CD4-positive, alpha-beta memory T cell (primary cell): ENCODE measurements at regions of chr15 and their contacts with region 1.

Region 1: GRCh38 chr15:80970018-80970658 is 19.5 kb downstream of the MESD start:
- DNase-seq: peak; percentile 52 to 65 (median 64)
- H3K4me3 ChIP-seq: no peak overlapping the region
- H3K4me3 Mint-ChIP-seq: no peak overlapping the region
- H3K27ac ChIP-seq: no peak overlapping the region
- H3K27ac Mint-ChIP-seq: peak overlapping the region in 4 of 7 donors; percentile 3 to 68 (median 44)
- H3K4me1 ChIP-seq: peaks cover 3% of the 10 kb centered on the region
- H3K4me1 Mint-ChIP-seq: peaks cover 3 to 21% (median 17%) of the 10 kb centered on the region in 4 donors
- H3K27me3 ChIP-seq: no peaks in the 10 kb centered on the region
- H3K27me3 Mint-ChIP-seq: no peaks in the 10 kb centered on the region

Region 2: GRCh38 chr15:80455668-80456442 is 514.3 kb before region 1 on chr15:
- CTCF ChIA-PET with region 1: interaction called, 47 read pairs
- POLR2A ChIA-PET with region 1: no interaction called
- intact Hi-C with region 1: no loop called
- DNase-seq: peak in 4 of 5 donors; percentile 52 to 55 (median 54)
- H3K4me3 ChIP-seq: no peak overlapping the region
- H3K4me3 Mint-ChIP-seq: peak overlapping the region in 1 of 8 donors; percentile 25
- H3K27ac ChIP-seq: no peak overlapping the region
- H3K27ac Mint-ChIP-seq: no peak overlapping the region
- H3K4me1 ChIP-seq: no peaks in the 10 kb centered on the region
- H3K4me1 Mint-ChIP-seq: peaks cover 0 to 6% (median 1%) of the 10 kb centered on the region in 4 donors
- H3K27me3 ChIP-seq: peaks cover 3% of the 10 kb centered on the region
- H3K27me3 Mint-ChIP-seq: peaks cover 8 to 17% of the 10 kb centered on the region in 2 donors

Region 3: GRCh38 chr15:80776420-80777045 is 193.6 kb before region 1 on chr15:
- CTCF ChIA-PET with region 1: interaction called, 20 read pairs
- POLR2A ChIA-PET with region 1: no interaction called
- intact Hi-C with region 1: no loop called
- DNase-seq: peak; percentile 39 to 58 (median 44)
- H3K4me3 ChIP-seq: no peak overlapping the region
- H3K4me3 Mint-ChIP-seq: no peak overlapping the region
- H3K27ac ChIP-seq: no peak overlapping the region
- H3K27ac Mint-ChIP-seq: no peak overlapping the region
- H3K4me1 ChIP-seq: peaks cover 5% of the 10 kb centered on the region
- H3K4me1 Mint-ChIP-seq: peaks cover 3 to 10% (median 5%) of the 10 kb centered on the region in 4 donors
- H3K27me3 ChIP-seq: peaks cover 22% of the 10 kb centered on the region
- H3K27me3 Mint-ChIP-seq: peaks cover 9 to 28% of the 10 kb centered on the region in 2 donors

Region 4: DNA sequence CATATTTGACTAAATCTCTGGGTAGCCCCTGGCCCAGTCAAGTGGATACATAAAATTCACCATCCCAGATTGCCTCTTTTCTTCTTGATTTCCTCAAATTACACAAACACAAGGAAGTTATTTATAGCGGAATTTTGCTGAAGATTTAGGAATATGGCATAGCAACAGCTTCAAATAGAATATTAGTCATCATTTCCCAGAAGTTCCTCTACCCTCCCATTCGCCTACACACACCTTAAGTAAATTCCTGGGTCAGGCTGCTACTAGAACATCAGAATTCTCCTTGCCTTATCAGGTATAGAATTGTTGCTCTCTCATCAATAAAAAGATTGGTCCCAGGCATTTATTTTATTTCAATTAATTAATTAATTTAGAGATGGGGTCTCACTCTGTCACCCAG is 12.2 kb before region 1 on chr15:
- CTCF ChIA-PET with region 1: interaction called, 16 read pairs
- POLR2A ChIA-PET with region 1: no interaction called
- intact Hi-C with region 1: no loop called
- DNase-seq: no peak
- H3K4me3 ChIP-seq: no peak overlapping the region
- H3K4me3 Mint-ChIP-seq: no peak overlapping the region
- H3K27ac ChIP-seq: no peak overlapping the region
- H3K27ac Mint-ChIP-seq: no peak overlapping the region
- H3K4me1 ChIP-seq: no peaks in the 10 kb centered on the region
- H3K4me1 Mint-ChIP-seq: peaks cover 8 to 20% (median 15%) of the 10 kb centered on the region in 4 donors
- H3K27me3 ChIP-seq: no peaks in the 10 kb centered on the region
- H3K27me3 Mint-ChIP-seq: no peaks in the 10 kb centered on the region

Region 5: GRCh38 chr15:80989518-80990478 is 19.7 kb after region 1 on chr15 and contains the start of gene MESD:
- CTCF ChIA-PET with region 1: interaction called, 12 read pairs
- POLR2A ChIA-PET with region 1: no interaction called
- intact Hi-C with region 1: no loop called
- DNase-seq: peak; percentile 92 to 95 (median 94)
- H3K4me3 ChIP-seq: peak within 1 kb of the TSS; percentile 54 to 97
- H3K4me3 Mint-ChIP-seq: peak within 1 kb of the TSS; percentile 91 to 99 (median 99)
- H3K27ac ChIP-seq: peak within 1 kb of the TSS; percentile 79
- H3K27ac Mint-ChIP-seq: peak within 1 kb of the TSS; percentile 95 to 99 (median 99)
- H3K4me1 ChIP-seq: peaks cover 60% of the 10 kb centered on the region
- H3K4me1 Mint-ChIP-seq: peaks cover 38 to 71% (median 56%) of the 10 kb centered on the region in 4 donors
- H3K27me3 ChIP-seq: no peaks in the 10 kb centered on the region
- H3K27me3 Mint-ChIP-seq: no peaks in the 10 kb centered on the region
- total RNA-seq, gene MESD: 43.3 to 44.6 TPM

Region 6: GRCh38 chr15:81000624-81001151 is 30.6 kb after region 1 on chr15 and contains the start of gene TLNRD1:
- CTCF ChIA-PET with region 1: interaction called, 3 read pairs
- POLR2A ChIA-PET with region 1: interaction called, 15 read pairs
- intact Hi-C with region 1: no loop called
- DNase-seq: peak; percentile 85 to 89 (median 87)
- H3K4me3 ChIP-seq: peak within 1 kb of the TSS; percentile 39 to 91
- H3K4me3 Mint-ChIP-seq: peak within 1 kb of the TSS; percentile 93 to 98 (median 96)
- H3K27ac ChIP-seq: peak within 1 kb of the TSS; percentile 95
- H3K27ac Mint-ChIP-seq: peak within 1 kb of the TSS; percentile 97 to 99 (median 98)
- H3K4me1 ChIP-seq: peaks cover 42% of the 10 kb centered on the region
- H3K4me1 Mint-ChIP-seq: peaks cover 34 to 63% (median 53%) of the 10 kb centered on the region in 4 donors
- H3K27me3 ChIP-seq: no peaks in the 10 kb centered on the region
- H3K27me3 Mint-ChIP-seq: peaks cover 0 to 1% of the 10 kb centered on the region in 2 donors
- total RNA-seq, gene TLNRD1: 29.7 to 29.8 TPM

Region 7: GRCh38 chr15:81011593-81011992 is 41.5 kb after region 1 on chr15:
- CTCF ChIA-PET with region 1: no interaction called
- POLR2A ChIA-PET with region 1: no interaction called
- intact Hi-C with region 1: no loop called
- DNase-seq: no peak
- H3K4me3 ChIP-seq: no peak overlapping the region
- H3K4me3 Mint-ChIP-seq: no peak overlapping the region
- H3K27ac ChIP-seq: no peak overlapping the region
- H3K27ac Mint-ChIP-seq: no peak overlapping the region
- H3K4me1 ChIP-seq: peaks cover 12% of the 10 kb centered on the region
- H3K4me1 Mint-ChIP-seq: peaks cover 20 to 46% (median 34%) of the 10 kb centered on the region in 4 donors
- H3K27me3 ChIP-seq: no peaks in the 10 kb centered on the region
- H3K27me3 Mint-ChIP-seq: no peaks in the 10 kb centered on the region

Region 8: DNA sequence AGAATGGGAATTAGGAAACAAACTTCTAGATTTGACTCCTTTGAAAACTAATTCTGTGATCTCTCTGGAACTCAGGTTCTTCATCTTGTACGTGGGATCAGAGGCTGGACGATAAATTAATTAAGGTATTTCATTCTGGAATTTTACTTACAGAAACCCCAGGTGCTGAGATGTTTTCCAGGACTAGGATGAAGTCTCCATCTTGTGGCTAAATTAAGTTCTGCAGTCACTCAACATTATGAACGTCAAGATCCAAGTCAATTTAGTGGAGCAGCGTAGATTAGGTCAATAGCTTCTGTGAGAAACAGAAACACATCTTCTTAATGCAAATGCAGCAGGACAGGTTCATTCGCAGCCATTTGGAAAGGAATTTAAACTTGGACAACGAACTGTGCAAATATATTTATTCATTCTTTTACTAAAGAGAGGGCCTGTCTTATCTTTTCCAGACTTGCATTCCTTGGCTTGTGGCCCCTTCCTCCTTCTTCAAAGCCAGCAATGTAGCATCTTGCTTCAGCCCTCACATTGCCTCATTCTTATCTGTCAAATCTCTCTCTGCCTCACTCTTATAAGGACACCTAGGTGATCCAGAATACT is 430.6 kb after region 1 on chr15:
- CTCF ChIA-PET with region 1: no interaction called
- POLR2A ChIA-PET with region 1: no interaction called
- intact Hi-C with region 1: loop called (anchors 10 kb)
- DNase-seq: peak in 4 of 5 donors; percentile 42 to 57 (median 48)
- H3K4me3 ChIP-seq: no peak overlapping the region
- H3K4me3 Mint-ChIP-seq: no peak overlapping the region
- H3K27ac ChIP-seq: no peak overlapping the region
- H3K27ac Mint-ChIP-seq: no peak overlapping the region
- H3K4me1 ChIP-seq: no peaks in the 10 kb centered on the region
- H3K4me1 Mint-ChIP-seq: peaks cover 0 to 4% (median 3%) of the 10 kb centered on the region in 4 donors
- H3K27me3 ChIP-seq: peaks cover 5% of the 10 kb centered on the region
- H3K27me3 Mint-ChIP-seq: peaks cover 5 to 7% of the 10 kb centered on the region in 2 donors